ENCODE measurements at regions of chr2 and their contacts with region 1.

Region 1: DNA sequence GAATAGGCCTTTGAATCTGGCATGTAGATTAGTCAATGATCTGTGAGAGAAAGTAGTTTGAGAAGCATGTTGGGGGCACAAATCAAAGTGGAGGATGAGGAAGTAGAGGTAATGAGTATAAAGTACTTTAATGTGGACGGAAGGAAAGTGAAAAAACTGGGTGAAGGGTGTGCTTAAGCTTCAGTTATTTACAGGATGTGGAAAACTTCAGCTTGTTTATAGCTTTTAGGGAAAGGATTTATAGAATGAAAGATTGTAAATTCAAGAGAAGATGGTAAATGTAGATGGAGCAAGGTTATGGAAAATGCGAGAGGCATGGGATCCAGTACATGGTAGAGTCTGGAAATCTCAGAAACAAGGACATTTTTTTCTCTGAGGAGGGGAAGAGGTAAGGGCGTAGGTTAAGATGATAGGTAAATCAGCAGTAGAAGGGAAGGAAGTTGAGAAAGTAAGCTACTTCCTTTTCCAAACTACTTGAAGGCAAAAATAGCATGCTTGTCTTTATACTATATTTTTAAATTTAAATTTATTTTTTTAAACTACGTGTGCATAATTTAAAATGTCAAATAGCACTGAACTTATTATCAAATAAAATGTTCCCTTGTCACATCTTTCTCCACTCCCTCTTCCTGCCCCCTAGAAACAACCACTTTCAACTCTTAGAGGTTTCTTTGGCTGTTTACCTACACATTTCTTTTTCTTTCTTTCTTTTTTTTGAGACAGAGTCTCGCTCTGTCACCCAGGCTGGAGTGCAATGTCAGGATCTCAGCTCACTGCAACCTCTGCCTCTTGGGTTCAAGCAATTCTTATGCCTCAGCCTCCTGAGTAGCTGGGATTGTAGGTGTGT is 8.5 kb downstream of the FAM117B start:
- DNase-seq: no peak
- ATAC-seq: peak; percentile 33
- H3K4me3 Mint-ChIP-seq: peak overlapping the region; percentile 53
- H3K27ac Mint-ChIP-seq: peak overlapping the region; percentile 91
- H3K4me1 Mint-ChIP-seq: peaks cover 64% of the 10 kb centered on the region
- H3K27me3 Mint-ChIP-seq: no peaks in the 10 kb centered on the region

Region 2: DNA sequence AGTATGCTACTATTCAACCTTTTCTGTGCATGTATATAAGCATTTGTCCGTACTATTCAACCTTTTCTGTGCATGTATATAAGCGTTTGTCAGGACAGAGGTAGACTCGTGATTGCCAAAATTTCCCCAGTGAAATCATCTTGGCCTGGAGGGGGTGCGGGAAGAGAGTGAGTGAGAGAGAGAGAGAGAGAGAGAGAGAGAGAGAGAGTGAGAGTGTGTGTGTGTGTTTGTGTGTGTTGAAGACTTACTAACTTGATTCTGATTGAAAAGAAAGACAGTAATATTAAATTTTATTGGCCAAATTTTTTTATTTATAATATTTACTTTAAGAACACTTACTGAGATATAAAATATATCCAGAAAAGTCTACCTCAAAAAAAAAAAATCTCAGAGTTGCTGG is 10.7 kb after region 1 on chr2:
- CTCF ChIA-PET with region 1: interaction called, 6 read pairs
- POLR2A ChIA-PET with region 1: interaction called, 3 read pairs
- intact Hi-C with region 1: loop called in 1 of 2 experiments (anchors 2 kb)
- DNase-seq: no peak
- ATAC-seq: no peak
- H3K4me3 Mint-ChIP-seq: no peak overlapping the region
- H3K27ac Mint-ChIP-seq: peak overlapping the region; percentile 40
- H3K4me1 Mint-ChIP-seq: peaks cover 82% of the 10 kb centered on the region
- H3K27me3 Mint-ChIP-seq: no peaks in the 10 kb centered on the region

Region 3: GRCh38 chr2:202671317-202672035 is 28.2 kb after region 1 on chr2:
- CTCF ChIA-PET with region 1: interaction called, 6 read pairs
- POLR2A ChIA-PET with region 1: interaction called, 9 read pairs
- intact Hi-C with region 1: loop called (anchors 2 kb)
- DNase-seq: no peak
- ATAC-seq: no peak
- H3K4me3 Mint-ChIP-seq: no peak overlapping the region
- H3K27ac Mint-ChIP-seq: no peak overlapping the region
- H3K4me1 Mint-ChIP-seq: peaks cover 78% of the 10 kb centered on the region
- H3K27me3 Mint-ChIP-seq: no peaks in the 10 kb centered on the region

Region 4: DNA sequence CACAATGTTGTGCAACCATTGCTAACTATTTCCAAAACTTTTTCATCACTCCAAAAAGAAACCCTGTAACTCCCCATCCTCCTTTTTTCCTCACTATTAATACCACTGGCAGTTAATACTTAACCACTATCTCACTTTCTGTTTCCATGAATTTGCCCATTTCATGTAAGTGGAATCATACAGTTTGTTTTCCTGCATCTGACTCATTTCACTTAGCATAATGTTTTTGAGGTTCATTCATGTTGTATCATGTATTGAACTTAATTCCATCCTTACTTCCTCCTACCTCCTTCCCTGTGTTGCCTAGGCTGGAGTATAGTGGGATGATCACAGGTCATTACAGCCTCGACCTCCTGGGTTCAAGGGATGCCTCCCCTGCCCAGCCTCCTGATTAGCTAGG is 59.9 kb after region 1 on chr2:
- CTCF ChIA-PET with region 1: interaction called, 3 read pairs
- POLR2A ChIA-PET with region 1: interaction called, 11 read pairs
- intact Hi-C with region 1: loop called (anchors 1 to 2 kb)
- DNase-seq: no peak
- ATAC-seq: peak; percentile 15
- H3K4me3 Mint-ChIP-seq: peak overlapping the region; percentile 9
- H3K27ac Mint-ChIP-seq: peak overlapping the region; percentile 91
- H3K4me1 Mint-ChIP-seq: peaks cover 68% of the 10 kb centered on the region
- H3K27me3 Mint-ChIP-seq: no peaks in the 10 kb centered on the region

Region 5: GRCh38 chr2:202762556-202762955 is 119.3 kb after region 1 on chr2:
- CTCF ChIA-PET with region 1: no interaction called
- POLR2A ChIA-PET with region 1: no interaction called
- intact Hi-C with region 1: loop called in 1 of 2 experiments (anchors 5 kb)
- DNase-seq: no peak
- ATAC-seq: peak; percentile 91
- H3K4me3 Mint-ChIP-seq: peak overlapping the region; percentile 41
- H3K27ac Mint-ChIP-seq: peak overlapping the region; percentile 89
- H3K4me1 Mint-ChIP-seq: peaks cover 39% of the 10 kb centered on the region
- H3K27me3 Mint-ChIP-seq: no peaks in the 10 kb centered on the region

Measured in activated CD4-positive, alpha-beta T cell treated with anti-CD3 and anti-CD28 coated beads for 36 hours (primary cell).